Right ventricle myocardium inferior (tissue), 1 donor: ENCODE measurements at regions of chr11 and their contacts with region 1.

Region 1: GRCh38 chr11:122853971-122854446 is 15.7 kb downstream of the CRTAM start:
- DNase-seq: no peak
- ATAC-seq: no peak

Region 2: DNA sequence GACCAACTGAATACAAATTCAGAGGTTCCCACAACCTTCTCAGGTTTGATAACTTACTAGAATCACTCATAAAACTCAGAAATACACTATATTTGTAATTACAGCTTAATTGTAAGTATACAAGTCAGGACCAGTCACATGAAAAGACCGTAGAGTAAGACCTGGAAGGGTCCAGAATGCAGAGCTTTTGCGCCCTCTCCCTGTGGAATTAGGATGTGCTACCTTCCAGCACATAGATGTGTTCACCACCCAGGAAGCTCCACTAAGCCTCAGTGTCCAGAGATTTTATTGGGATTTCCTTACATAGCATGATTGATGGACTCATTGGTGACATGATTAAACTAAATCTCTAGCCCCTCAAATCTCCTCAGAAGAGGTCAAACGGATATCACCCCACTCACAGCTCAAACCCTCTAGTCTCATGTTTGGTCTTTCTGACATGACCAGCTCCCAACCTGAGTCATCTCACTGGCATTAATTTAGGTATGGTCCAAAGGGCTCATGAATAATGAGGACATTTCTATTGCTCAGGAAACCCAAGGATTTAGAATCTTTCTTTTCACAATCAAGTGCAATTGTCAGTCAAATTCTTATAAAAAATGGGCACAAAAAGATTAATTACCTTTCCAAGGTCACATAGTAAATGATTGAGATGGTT is 275.7 kb before region 1 on chr11:
- intact Hi-C with region 1: loop called (anchors 2 kb)
- DNase-seq: no peak
- ATAC-seq: no peak

Region 3: DNA sequence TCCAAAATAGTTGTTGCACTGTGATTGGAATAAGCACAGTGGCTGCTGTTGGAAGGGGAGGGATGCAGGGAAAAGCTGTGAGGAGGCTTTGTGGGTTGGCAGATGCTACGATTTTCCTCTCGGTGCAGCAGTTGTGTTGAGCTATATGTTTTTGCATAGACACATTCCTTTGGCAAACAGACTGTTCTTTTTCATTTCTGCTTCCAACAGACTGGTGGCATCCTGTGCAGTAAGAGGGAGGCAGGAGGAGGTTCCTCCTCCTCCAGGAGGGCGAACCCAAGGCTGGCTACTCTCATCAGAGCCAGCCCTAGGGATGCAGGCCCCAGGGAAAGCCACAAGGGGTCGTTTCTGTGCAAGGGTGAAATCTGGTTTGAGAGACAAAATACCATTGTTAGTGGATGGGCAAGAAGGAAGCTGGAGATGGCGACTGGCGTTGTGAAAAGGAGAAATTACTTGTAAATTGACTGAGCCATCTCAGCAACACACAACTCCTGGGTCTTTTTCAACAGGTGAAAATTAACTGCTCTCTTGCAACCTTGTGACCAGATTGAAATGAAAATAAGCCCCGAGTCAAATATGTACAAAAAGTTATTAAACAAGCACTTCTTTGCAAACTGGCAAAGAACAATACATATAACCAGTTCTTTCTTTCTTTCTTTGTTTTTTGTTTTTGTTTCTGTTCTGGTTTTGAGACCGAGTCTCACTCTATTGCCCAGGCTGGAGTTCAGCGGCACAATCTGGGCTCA is 225.0 kb before region 1 on chr11:
- intact Hi-C with region 1: loop called (anchors 1 kb)
- DNase-seq: no peak
- ATAC-seq: peak; percentile 67

Region 4: DNA sequence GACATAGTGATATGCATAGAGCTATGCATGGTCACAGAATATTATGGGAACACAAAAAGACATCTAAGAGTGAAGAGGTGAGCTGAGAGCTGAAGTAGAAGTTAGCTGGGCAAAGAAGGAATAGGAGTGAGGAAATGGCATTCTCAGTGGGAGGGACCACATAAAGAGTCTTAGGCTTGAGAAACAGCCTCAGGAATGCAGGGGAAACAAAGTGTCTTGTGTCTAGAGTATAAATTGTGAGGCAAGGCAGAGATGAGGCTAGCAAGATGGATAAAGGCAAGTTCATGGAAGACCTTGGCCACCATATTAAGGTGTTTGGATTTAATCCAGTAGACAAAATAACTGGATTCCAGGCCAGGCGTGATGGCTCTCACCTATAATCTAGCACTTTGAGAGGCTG is 56.4 kb before region 1 on chr11:
- intact Hi-C with region 1: loop called (anchors 1 kb)
- DNase-seq: no peak
- ATAC-seq: no peak